ENCODE measurements at regions of chr17 and their contacts with region 1.

Region 1: GRCh38 chr17:10697092-10698081 is at the starts of genes ADPRM and SCO1:
- DNase-seq: peak; percentile 93
- H3K4me3 Mint-ChIP-seq: peak within 1 kb of the TSS; percentile 93
- H3K27ac Mint-ChIP-seq: peak within 1 kb of the TSS; percentile 97
- H3K4me1 Mint-ChIP-seq: peaks cover 59% of the 10 kb centered on the region
- H3K27me3 Mint-ChIP-seq: no peaks in the 10 kb centered on the region
- total RNA-seq, gene ADPRM: 11.1 to 12.6 TPM
- total RNA-seq, gene SCO1: 34.0 to 37.6 TPM

Region 2: DNA sequence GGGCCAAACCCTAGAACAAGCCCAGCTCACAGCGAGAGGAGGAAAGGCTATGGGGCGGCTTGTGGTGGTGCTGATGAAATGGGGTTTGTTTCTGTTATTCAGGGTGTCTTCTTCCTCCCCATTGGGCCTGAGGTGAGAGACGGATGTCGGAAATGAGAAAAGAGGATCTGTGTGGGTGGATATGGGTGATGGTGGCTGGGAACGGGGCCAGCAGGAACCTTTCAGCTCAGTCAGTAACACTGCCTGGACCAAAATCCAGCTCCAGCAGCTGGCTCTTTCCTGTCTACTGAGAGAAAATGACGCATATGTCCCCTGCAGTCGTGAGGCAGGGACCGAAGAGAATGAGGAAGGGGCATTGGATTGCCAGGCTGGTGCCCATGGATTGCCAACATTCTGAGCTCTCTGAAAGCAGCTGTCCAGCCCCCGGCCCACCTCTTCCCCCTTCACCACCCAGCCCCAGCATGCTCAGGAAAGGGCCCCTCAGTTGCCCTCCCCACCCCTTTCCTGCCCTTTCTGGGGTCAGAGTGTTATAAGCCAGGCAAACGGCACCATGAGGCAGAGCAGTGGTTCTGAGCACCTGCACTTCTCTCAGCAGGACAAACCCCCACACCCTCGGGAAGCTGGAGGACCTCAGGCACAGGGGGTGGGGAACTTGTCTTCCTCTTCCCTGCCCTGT is 44.3 kb before region 1 on chr17:
- CTCF ChIA-PET with region 1: no interaction called
- intact Hi-C with region 1: loop called (anchors 2 kb)
- DNase-seq: peak; percentile 41
- H3K4me3 Mint-ChIP-seq: no peak overlapping the region
- H3K27ac Mint-ChIP-seq: no peak overlapping the region
- H3K4me1 Mint-ChIP-seq: peaks cover 13% of the 10 kb centered on the region
- H3K27me3 Mint-ChIP-seq: no peaks in the 10 kb centered on the region

Region 3: GRCh38 chr17:10683853-10684252 is 13.5 kb before region 1 on chr17:
- CTCF ChIA-PET with region 1: interaction called, 13 read pairs
- intact Hi-C with region 1: no loop called
- DNase-seq: no peak
- H3K4me3 Mint-ChIP-seq: no peak overlapping the region
- H3K27ac Mint-ChIP-seq: no peak overlapping the region
- H3K4me1 Mint-ChIP-seq: peaks cover 5% of the 10 kb centered on the region
- H3K27me3 Mint-ChIP-seq: no peaks in the 10 kb centered on the region

Region 4: DNA sequence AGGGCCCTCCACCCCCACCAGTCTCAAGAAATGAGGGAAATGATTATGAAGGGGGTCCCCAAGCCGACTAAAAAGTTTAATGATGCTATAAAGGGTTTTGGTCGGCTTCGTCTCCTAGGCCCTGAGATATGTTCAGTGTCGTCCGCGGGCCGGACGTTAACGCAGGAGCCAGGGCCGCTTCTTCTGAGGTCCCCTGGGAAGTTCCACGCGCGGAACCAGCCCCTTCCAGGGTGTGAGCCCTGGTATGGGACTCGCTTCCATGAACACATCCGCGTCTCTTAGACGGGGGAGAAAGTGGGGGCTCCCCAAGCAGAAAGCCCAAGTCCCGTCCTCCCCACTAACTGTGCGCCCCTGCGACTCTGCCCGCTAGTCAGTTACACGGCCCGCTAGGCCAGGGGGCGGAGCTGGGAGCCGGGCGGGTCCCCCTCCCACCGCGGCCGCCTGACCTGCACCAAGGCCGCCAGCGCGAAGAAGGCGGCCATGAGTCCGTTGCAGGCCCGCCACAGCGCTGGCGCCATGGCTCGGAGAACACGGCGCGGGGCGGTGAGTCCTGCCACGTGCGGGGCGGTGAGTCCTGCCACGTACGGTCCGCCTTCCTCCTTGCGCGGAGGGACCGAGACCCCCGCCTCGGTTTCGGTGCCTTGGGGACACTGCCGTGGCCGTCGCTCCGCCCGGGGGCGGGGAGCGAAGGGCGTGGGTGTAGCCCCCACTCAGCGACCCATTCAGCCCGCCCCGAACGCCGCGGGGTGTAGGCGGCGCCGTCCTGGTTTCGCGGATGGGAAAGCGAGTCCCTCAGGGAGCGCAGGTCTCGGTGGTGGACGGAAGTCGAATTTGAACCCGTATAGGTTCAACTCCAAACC is 32.2 kb after region 1 on chr17 and contains the start of gene TMEM220:
- CTCF ChIA-PET with region 1: no interaction called
- intact Hi-C with region 1: loop called (anchors 1 kb)
- DNase-seq: peak; percentile 37
- H3K4me3 Mint-ChIP-seq: peak within 1 kb of the TSS; percentile 84
- H3K27ac Mint-ChIP-seq: peak within 1 kb of the TSS; percentile 38
- H3K4me1 Mint-ChIP-seq: peaks cover 19% of the 10 kb centered on the region
- H3K27me3 Mint-ChIP-seq: no peaks in the 10 kb centered on the region
- total RNA-seq, gene TMEM220: 0.79 to 0.94 TPM

Region 5: DNA sequence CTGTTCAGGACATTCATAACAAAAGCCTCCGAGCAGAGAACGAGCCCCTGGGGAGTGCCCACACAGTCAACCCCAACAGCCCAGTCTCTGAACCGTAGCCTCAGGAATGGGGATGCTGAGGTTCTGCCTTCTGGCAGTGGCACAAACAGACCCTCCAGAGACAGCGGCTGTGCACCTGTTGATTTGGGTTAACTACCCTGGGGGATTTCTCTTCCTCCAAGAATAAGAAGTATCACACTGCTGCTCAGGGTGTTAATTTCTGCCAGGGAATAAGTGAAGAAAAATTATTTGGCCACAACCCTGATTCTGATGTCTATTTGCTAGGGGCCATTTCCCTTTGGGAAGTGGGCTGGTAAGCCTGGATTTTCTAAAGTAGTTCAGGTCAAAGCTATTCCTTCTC is 191.5 kb after region 1 on chr17:
- CTCF ChIA-PET with region 1: no interaction called
- intact Hi-C with region 1: no loop called
- DNase-seq: no peak
- H3K4me3 Mint-ChIP-seq: no peak overlapping the region
- H3K27ac Mint-ChIP-seq: no peak overlapping the region
- H3K4me1 Mint-ChIP-seq: no peaks in the 10 kb centered on the region
- H3K27me3 Mint-ChIP-seq: peaks cover 12% of the 10 kb centered on the region

Region 6: GRCh38 chr17:10956821-10957220 is 259.4 kb after region 1 on chr17:
- CTCF ChIA-PET with region 1: no interaction called
- intact Hi-C with region 1: no loop called
- DNase-seq: no peak
- H3K4me3 Mint-ChIP-seq: no peak overlapping the region
- H3K27ac Mint-ChIP-seq: no peak overlapping the region
- H3K4me1 Mint-ChIP-seq: no peaks in the 10 kb centered on the region
- H3K27me3 Mint-ChIP-seq: peaks cover 16% of the 10 kb centered on the region

Measured in activated naive CD4-positive, alpha-beta T cell treated with anti-CD3 and anti-CD28 coated beads for 36 hours (primary cell).